CD4-positive, alpha-beta T cell (primary cell): ENCODE measurements at regions of chr19 and their contacts with region 1.

Region 1: GRCh38 chr19:34269968-34270621 is 15.7 kb downstream of the GARRE1 start:
- DNase-seq: peak; percentile 54 to 93 (median 70)
- ATAC-seq: peak; percentile 89
- H3K4me3 ChIP-seq: peak overlapping the region; percentile 41
- H3K4me3 Mint-ChIP-seq: peak overlapping the region; percentile 76
- H3K27ac ChIP-seq: peak overlapping the region; percentile 88 to 92
- H3K27ac Mint-ChIP-seq: peak overlapping the region; percentile 95
- H3K4me1 ChIP-seq: peaks cover 91% of the 10 kb centered on the region
- H3K4me1 Mint-ChIP-seq: peaks cover 86% of the 10 kb centered on the region
- H3K27me3 ChIP-seq: no peaks in the 10 kb centered on the region
- H3K27me3 Mint-ChIP-seq: no peaks in the 10 kb centered on the region
- CTCF ChIP-seq: no peak

Region 2: GRCh38 chr19:34171877-34172660 is 98.0 kb before region 1 on chr19 and contains the start of gene LSM14A:
- CTCF ChIA-PET with region 1: interaction called, 3 read pairs
- POLR2A ChIA-PET with region 1: interaction called, 19 read pairs
- intact Hi-C with region 1: loop called in 1 of 2 experiments (anchors 2 kb)
- DNase-seq: peak; percentile 84 to 97 (median 91)
- ATAC-seq: peak; percentile 85
- H3K4me3 ChIP-seq: peak within 1 kb of the TSS; percentile 95
- H3K4me3 Mint-ChIP-seq: peak within 1 kb of the TSS; percentile 99
- H3K27ac ChIP-seq: peak within 1 kb of the TSS; percentile 97 to 98
- H3K27ac Mint-ChIP-seq: peak within 1 kb of the TSS; percentile 97
- H3K4me1 ChIP-seq: peaks cover 40% of the 10 kb centered on the region
- H3K4me1 Mint-ChIP-seq: peaks cover 50% of the 10 kb centered on the region
- H3K27me3 ChIP-seq: no peaks in the 10 kb centered on the region
- H3K27me3 Mint-ChIP-seq: no peaks in the 10 kb centered on the region
- CTCF ChIP-seq: no peak
- total RNA-seq, gene LSM14A: 210 to 217 TPM

Region 3: DNA sequence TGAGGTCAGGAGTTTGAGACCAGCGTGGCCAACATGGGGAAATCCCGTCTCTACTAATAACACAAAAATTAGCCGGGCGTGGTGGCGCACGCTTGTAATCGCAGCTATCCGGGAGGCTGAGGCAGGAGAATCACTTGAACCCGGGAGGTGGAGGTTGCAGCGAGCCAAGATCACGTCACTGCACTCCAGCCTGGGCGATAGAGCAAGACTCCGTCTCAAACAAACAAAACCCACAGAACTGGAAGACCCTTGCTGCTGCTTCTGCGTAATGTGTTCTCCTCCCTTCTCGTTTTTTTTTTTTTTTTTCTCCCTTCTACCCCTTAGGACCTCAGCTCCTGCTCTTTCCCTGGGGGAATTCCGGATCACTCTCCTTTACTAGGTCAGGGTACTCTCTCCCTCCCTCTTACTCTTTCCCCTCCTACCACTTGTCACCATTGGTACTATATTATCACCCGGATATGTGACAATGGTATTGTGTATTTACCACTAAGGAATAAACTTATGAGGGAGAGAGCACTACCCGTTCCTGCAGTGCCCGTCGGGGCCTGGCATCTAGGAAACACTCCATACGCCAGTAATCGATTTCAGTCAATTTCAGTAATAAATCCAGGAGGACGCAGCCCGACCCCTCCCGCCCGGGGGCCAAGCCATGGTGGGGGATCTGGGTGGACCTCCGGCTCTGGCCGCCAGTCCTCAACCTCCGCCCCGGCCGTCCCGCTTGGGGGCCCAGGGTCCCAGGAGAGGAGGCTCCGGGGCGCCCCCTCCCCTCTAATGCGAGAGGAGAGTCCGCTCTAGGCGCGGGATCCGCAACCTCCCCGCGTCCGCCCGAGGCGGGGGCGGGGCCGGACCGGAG is 16.2 kb before region 1 on chr19:
- CTCF ChIA-PET with region 1: interaction called, 5 read pairs
- POLR2A ChIA-PET with region 1: interaction called, 30 read pairs
- intact Hi-C with region 1: loop called (anchors 1 kb)
- DNase-seq: peak in 7 of 14 experiments; percentile 53 to 91 (median 78)
- ATAC-seq: peak; percentile 46
- H3K4me3 ChIP-seq: peak overlapping the region; percentile 76
- H3K4me3 Mint-ChIP-seq: peak overlapping the region; percentile 95
- H3K27ac ChIP-seq: peak overlapping the region; percentile 75 to 83
- H3K27ac Mint-ChIP-seq: peak overlapping the region; percentile 90
- H3K4me1 ChIP-seq: peaks cover 31% of the 10 kb centered on the region
- H3K4me1 Mint-ChIP-seq: peaks cover 44% of the 10 kb centered on the region
- H3K27me3 ChIP-seq: no peaks in the 10 kb centered on the region
- H3K27me3 Mint-ChIP-seq: no peaks in the 10 kb centered on the region
- CTCF ChIP-seq: no peak

Region 4: GRCh38 chr19:34291235-34291634 is 21.1 kb after region 1 on chr19:
- CTCF ChIA-PET with region 1: no interaction called
- POLR2A ChIA-PET with region 1: interaction called, 10 read pairs
- intact Hi-C with region 1: no loop called
- DNase-seq: no peak
- ATAC-seq: no peak
- H3K4me3 ChIP-seq: no peak overlapping the region
- H3K4me3 Mint-ChIP-seq: no peak overlapping the region
- H3K27ac ChIP-seq: no peak overlapping the region
- H3K27ac Mint-ChIP-seq: no peak overlapping the region
- H3K4me1 ChIP-seq: peaks cover 12% of the 10 kb centered on the region
- H3K4me1 Mint-ChIP-seq: peaks cover 31% of the 10 kb centered on the region
- H3K27me3 ChIP-seq: no peaks in the 10 kb centered on the region
- H3K27me3 Mint-ChIP-seq: no peaks in the 10 kb centered on the region
- CTCF ChIP-seq: no peak

Region 5: GRCh38 chr19:34308381-34309367 is 38.6 kb after region 1 on chr19:
- CTCF ChIA-PET with region 1: no interaction called
- POLR2A ChIA-PET with region 1: interaction called, 33 read pairs
- intact Hi-C with region 1: loop called (anchors 1 to 5 kb)
- DNase-seq: peak in 6 of 14 experiments; percentile 19 to 90 (median 60)
- ATAC-seq: peak; percentile 81
- H3K4me3 ChIP-seq: no peak overlapping the region
- H3K4me3 Mint-ChIP-seq: peak overlapping the region; percentile 75
- H3K27ac ChIP-seq: peak overlapping the region; percentile 52 to 59
- H3K27ac Mint-ChIP-seq: peak overlapping the region; percentile 99
- H3K4me1 ChIP-seq: peaks cover 59% of the 10 kb centered on the region
- H3K4me1 Mint-ChIP-seq: peaks cover 75% of the 10 kb centered on the region
- H3K27me3 ChIP-seq: no peaks in the 10 kb centered on the region
- H3K27me3 Mint-ChIP-seq: no peaks in the 10 kb centered on the region
- CTCF ChIP-seq: no peak

Region 6: DNA sequence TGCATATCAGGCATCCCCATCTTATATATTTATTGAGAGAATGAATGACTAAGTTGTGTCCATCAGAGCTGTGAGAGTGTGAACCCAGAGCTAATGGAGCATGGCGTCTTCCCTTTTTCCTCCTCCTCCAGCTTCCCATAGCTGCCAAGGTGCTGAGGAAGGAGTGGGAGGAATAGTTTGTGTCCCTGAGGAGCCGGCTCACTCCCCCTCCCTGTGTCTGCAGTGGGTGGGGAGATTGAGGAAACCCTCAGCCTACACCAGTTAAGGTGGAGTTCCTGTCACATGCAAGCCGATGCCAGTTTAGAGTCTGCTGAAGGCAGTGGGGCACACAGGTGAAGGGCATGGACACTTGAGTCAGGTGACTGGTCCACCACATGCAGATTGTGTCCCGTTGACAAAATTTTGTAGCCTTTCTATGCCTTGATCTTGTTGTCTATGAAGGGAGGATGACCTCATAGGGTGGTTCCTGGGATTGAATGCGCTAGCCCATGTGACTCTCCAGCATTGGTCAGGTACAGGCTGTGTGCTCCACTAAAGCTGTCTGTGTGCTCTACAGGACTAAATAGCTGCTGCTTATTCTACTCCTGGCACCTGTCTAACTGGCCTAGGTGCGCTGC is 47.3 kb after region 1 on chr19:
- CTCF ChIA-PET with region 1: interaction called, 5 read pairs
- POLR2A ChIA-PET with region 1: interaction called, 6 read pairs
- intact Hi-C with region 1: loop called in 1 of 2 experiments (anchors 2 kb)
- DNase-seq: peak in 9 of 14 experiments; percentile 8 to 72 (median 41)
- ATAC-seq: peak; percentile 83
- H3K4me3 ChIP-seq: no peak overlapping the region
- H3K4me3 Mint-ChIP-seq: peak overlapping the region; percentile 61
- H3K27ac ChIP-seq: peak overlapping the region; percentile 16
- H3K27ac Mint-ChIP-seq: peak overlapping the region; percentile 89
- H3K4me1 ChIP-seq: peaks cover 40% of the 10 kb centered on the region
- H3K4me1 Mint-ChIP-seq: peaks cover 68% of the 10 kb centered on the region
- H3K27me3 ChIP-seq: no peaks in the 10 kb centered on the region
- H3K27me3 Mint-ChIP-seq: no peaks in the 10 kb centered on the region
- CTCF ChIP-seq: no peak

Region 7: DNA sequence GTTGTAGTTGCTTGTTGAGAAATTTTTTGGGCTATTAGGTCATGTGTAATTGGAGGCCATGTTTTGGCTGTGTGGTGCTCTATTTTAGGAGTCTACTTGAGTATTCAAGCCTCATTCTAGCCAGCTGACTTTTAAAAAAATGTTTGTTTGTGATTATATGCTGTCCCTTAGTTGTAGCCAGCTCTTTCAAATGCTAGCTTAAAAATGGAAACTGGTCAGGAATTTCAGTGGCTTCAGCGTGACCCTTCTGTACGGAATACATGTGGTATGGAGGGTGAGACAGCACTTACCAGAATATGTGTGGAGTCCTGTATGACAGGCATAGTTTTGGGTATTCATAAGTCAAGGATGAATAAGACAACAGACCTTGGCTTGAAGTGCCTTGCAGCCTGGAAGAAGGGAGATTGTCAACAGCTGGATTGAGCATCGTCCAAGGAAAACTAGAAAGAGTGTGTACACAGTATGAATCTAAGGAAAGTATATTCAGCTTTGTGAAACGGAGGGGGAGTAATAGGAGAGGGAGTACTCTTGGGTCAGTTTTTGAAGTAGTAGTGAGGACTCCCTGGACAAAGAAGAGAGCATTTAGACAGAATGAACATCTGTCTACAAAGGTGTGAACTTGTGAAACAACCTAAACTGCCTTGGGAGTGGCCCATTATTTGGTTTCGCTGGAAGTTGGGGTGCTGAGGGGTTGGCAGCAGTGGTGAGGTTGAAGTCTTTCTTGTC is 191.4 kb after region 1 on chr19:
- CTCF ChIA-PET with region 1: no interaction called
- POLR2A ChIA-PET with region 1: no interaction called
- intact Hi-C with region 1: no loop called
- DNase-seq: no peak
- ATAC-seq: no peak
- H3K4me3 ChIP-seq: no peak overlapping the region
- H3K4me3 Mint-ChIP-seq: no peak overlapping the region
- H3K27ac ChIP-seq: no peak overlapping the region
- H3K27ac Mint-ChIP-seq: no peak overlapping the region
- H3K4me1 ChIP-seq: no peaks in the 10 kb centered on the region
- H3K4me1 Mint-ChIP-seq: peaks cover 5% of the 10 kb centered on the region
- H3K27me3 ChIP-seq: no peaks in the 10 kb centered on the region
- H3K27me3 Mint-ChIP-seq: no peaks in the 10 kb centered on the region
- CTCF ChIP-seq: no peak